Esophagus muscularis mucosa (tissue), 4 donors: ENCODE measurements at regions of chr3 and their contacts with region 1.

Region 1: GRCh38 chr3:25594007-25594502 is 70.7 kb downstream of the TOP2B start:
- DNase-seq: no peak
- H3K4me3 ChIP-seq: no peak overlapping the region
- H3K27ac ChIP-seq: peak overlapping the region; percentile 68 to 71 (median 69)
- H3K4me1 ChIP-seq: peaks cover 28 to 84% (median 76%) of the 10 kb centered on the region in 4 donors
- H3K27me3 ChIP-seq: no peaks in the 10 kb centered on the region
- CTCF ChIP-seq: peak; percentile 82 to 91 (median 87)
- EP300 ChIP-seq: no peak
- POLR2A ChIP-seq: no peak

Region 2: DNA sequence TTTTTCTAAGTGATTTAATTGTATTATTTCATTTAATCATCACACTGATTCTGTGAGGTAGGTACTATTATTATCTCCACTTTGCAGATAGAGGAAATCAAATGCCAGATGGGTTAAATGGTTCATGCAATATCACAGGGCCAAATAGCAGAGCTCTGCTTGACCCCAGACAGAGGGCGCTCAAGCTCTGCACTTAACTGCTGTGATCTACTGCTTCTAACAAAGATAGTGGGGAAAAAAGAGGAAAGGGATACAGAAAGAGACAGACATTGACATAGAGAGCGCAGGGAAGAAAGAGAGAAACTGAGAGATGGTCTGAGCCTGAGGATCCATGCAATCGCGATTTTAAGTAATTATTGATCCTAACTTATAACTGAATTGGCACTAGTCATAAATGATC is 820.3 kb before region 1 on chr3:
- intact Hi-C with region 1: loop called (anchors 5 kb)
- DNase-seq: no peak
- H3K4me3 ChIP-seq: no peak overlapping the region
- H3K27ac ChIP-seq: no peak overlapping the region
- H3K4me1 ChIP-seq: peaks cover 0 to 6% (median 2%) of the 10 kb centered on the region in 4 donors
- H3K27me3 ChIP-seq: no peaks in the 10 kb centered on the region
- CTCF ChIP-seq: peak; percentile 78 to 82 (median 80)
- EP300 ChIP-seq: no peak
- POLR2A ChIP-seq: no peak

Region 3: DNA sequence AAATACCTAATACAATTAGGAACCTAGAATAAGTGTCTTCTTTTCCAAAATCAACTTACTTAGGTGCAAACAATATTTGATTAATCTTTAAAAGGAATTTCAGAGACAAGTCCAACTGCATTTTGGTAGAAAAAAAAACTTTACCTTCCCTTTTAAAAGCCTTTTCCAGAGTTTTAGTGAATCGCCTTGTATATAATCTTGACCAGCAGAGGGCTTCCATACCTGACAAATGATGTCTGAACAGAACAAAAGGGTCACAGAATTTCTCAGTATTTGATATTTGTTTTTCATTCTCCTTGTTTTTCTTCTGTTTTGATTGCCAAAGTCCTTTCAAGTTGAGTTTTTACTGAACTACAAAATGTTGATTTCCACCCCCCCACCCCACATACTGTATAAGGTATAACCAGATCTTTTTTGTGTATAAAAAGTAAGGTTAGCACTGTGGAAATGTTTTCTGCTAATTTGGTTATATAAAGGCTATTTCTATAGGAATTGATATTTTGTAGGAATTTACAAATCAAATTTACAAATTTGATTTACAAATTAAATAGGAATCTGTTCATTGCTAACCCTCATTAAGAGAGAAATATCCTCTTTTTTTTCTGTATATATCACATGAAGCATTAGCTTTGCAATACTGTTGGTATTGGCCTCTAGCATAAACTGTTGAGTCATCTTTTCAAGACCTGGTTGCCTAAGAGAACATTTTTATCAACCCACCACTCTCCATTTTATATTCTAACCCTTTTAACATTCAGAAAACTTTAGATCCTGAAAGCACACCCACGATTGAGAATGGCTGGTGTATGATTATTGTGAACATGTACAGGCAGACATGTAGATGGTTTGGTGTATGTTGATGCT is 630.1 kb before region 1 on chr3:
- intact Hi-C with region 1: loop called (anchors 5 kb)
- DNase-seq: no peak
- H3K4me3 ChIP-seq: no peak overlapping the region
- H3K27ac ChIP-seq: no peak overlapping the region
- H3K4me1 ChIP-seq: peaks cover 0 to 28% (median 8%) of the 10 kb centered on the region in 4 donors
- H3K27me3 ChIP-seq: no peaks in the 10 kb centered on the region
- CTCF ChIP-seq: peak; percentile 38 to 64 (median 50)
- EP300 ChIP-seq: no peak
- POLR2A ChIP-seq: no peak

Region 4: DNA sequence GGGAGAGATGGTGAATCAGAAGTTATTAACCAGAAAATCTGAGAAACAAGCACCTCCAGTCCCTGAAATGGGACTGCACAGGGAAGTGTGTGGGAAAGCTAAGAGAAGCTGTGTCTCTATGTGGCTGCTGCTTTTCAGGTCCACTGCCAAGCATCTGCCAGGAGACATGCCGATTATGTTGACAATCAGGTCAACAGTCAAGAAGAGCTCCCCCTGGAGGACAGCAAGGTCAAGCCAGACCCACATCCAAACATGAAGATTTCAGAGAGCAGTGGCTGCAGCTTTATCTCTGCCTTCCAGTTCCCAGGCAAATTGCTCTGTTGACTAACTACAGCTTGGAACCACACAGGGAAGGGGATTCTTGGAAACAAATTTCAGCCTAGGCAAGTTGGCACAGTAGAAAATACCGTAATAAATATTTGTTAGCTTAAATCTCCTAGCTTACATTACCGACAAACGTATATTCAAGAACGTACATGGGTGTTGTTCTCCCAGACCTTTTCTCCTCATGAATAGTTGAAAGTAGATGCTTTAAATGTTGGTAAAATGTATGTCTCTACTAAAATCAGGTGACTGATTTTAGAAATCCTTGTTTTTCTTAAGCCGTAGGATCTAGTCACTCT is 560.5 kb before region 1 on chr3:
- intact Hi-C with region 1: loop called (anchors 10 kb)
- DNase-seq: no peak
- H3K4me3 ChIP-seq: no peak overlapping the region
- H3K27ac ChIP-seq: no peak overlapping the region
- H3K4me1 ChIP-seq: peaks cover 9 to 64% (median 33%) of the 10 kb centered on the region in 4 donors
- H3K27me3 ChIP-seq: no peaks in the 10 kb centered on the region
- CTCF ChIP-seq: peak; percentile 17 to 56 (median 32)
- EP300 ChIP-seq: no peak
- POLR2A ChIP-seq: no peak

Region 5: DNA sequence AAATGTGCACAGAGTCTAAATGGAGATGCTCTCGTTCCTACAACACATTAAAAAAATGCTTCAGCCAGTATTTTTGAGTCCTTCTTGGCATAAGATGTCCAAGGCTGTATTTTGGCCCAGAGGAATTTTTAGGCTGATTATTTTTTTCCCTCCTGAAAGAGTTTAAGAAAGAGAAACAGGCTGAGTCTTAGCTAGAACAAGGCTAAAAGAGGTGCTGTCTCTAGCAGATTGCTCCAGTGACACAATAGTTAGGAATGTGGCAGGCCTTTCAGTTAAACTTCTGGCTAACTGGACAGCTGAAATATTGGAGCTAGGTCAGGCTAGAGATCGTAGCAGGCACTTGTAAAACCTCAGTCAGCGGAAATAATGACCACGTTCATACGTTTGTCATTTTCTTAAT is 437.4 kb before region 1 on chr3:
- intact Hi-C with region 1: loop called (anchors 10 kb)
- DNase-seq: no peak
- H3K4me3 ChIP-seq: peak overlapping the region in 2 of 4 donors; percentile 20 to 31
- H3K27ac ChIP-seq: peak overlapping the region; percentile 48 to 78 (median 66)
- H3K4me1 ChIP-seq: peaks cover 6 to 51% (median 38%) of the 10 kb centered on the region in 4 donors
- H3K27me3 ChIP-seq: no peaks in the 10 kb centered on the region
- CTCF ChIP-seq: no peak
- EP300 ChIP-seq: no peak
- POLR2A ChIP-seq: no peak

Region 6: DNA sequence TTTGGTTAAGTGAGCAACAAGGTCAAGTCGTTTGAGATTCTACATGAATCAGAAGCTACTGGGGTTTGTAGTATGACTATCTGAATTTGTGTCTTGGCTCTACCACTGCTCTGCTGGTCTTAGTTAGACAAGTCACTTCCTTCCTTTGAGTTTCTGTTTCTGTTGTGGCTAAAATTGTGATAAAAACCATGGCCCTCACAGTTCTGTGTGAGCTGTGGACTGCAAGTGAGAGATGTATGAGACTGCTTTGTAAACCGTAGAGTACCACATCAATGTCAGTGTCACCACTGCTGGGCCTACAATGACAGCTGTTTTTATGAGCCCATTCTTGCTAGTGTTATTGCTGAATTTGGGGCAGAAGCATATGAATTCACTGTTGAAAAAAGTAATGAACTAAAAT is 133.3 kb before region 1 on chr3:
- intact Hi-C with region 1: no loop called
- DNase-seq: no peak
- H3K4me3 ChIP-seq: no peak overlapping the region
- H3K27ac ChIP-seq: peak overlapping the region in 2 of 4 donors; percentile 1 to 12
- H3K4me1 ChIP-seq: peaks cover 40 to 95% (median 74%) of the 10 kb centered on the region in 4 donors
- H3K27me3 ChIP-seq: no peaks in the 10 kb centered on the region
- CTCF ChIP-seq: no peak
- EP300 ChIP-seq: no peak
- POLR2A ChIP-seq: no peak